ENCODE measurements at regions of chr5 and their contacts with region 1.

Region 1: GRCh38 chr5:62214701-62215100 is 91.3 kb upstream of the KIF2A start:
- DNase-seq: no peak
- H3K4me3 ChIP-seq: no peak overlapping the region
- H3K27ac ChIP-seq: no peak overlapping the region
- H3K4me1 ChIP-seq: no peaks in the 10 kb centered on the region
- H3K27me3 ChIP-seq: peaks cover 0 to 15% (median 0%) of the 10 kb centered on the region in 3 donors
- CTCF ChIP-seq: no peak
- EP300 ChIP-seq: no peak
- POLR2A ChIP-seq: no peak

Region 2: DNA sequence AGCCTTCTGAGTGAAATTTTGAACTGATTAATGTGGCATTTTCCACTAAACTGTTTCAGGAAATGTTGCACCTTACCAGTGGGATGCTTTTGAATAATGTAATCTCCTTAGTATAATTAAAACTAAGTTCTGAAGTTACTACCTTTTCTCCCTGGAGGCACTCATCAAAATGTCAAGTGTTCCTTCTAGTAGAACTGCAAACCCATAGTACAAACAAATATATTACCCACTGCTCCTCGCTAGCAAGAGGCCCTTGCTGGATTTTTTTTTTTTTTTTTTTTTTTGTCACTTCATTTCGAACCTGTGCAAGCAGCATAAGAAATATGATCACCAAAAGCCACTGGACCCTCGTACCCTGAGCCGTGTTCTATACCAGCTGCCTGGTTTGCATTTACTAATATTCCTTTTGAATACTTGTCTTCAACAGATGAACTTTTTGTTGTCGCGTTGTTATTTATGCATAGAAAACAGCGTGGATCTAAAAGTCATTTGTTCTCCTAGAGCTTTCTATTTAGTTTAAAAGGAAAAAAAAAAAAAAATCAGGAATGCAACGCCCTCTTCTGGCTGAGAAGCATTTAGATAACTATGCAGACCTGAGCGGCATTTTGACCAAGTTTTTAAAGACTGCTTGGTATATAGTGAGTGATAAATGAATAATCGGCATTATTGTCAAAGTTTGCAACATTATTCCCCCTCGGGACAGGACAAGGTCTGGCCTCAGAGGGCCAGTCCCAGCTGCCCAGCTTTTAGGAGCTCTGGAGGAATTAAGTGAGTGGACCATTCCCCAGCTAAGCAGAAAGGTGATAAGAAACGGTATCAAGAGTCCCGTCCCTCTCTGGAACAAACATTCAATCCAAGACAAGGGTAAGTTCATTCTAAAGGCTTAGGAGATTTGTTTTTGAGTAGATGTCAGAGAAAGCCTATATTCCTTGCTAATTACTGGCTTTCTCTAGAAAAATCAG is 71.2 kb before region 1 on chr5:
- intact Hi-C with region 1: no loop called
- DNase-seq: peak in 1 of 2 donors; percentile 62
- H3K4me3 ChIP-seq: no peak overlapping the region
- H3K27ac ChIP-seq: no peak overlapping the region
- H3K4me1 ChIP-seq: peaks cover 7 to 16% (median 13%) of the 10 kb centered on the region in 4 donors
- H3K27me3 ChIP-seq: peaks cover 0 to 7% (median 0%) of the 10 kb centered on the region in 3 donors
- CTCF ChIP-seq: peak in 2 of 7 experiments; percentile 34 to 42
- EP300 ChIP-seq: no peak
- POLR2A ChIP-seq: no peak

Region 3: DNA sequence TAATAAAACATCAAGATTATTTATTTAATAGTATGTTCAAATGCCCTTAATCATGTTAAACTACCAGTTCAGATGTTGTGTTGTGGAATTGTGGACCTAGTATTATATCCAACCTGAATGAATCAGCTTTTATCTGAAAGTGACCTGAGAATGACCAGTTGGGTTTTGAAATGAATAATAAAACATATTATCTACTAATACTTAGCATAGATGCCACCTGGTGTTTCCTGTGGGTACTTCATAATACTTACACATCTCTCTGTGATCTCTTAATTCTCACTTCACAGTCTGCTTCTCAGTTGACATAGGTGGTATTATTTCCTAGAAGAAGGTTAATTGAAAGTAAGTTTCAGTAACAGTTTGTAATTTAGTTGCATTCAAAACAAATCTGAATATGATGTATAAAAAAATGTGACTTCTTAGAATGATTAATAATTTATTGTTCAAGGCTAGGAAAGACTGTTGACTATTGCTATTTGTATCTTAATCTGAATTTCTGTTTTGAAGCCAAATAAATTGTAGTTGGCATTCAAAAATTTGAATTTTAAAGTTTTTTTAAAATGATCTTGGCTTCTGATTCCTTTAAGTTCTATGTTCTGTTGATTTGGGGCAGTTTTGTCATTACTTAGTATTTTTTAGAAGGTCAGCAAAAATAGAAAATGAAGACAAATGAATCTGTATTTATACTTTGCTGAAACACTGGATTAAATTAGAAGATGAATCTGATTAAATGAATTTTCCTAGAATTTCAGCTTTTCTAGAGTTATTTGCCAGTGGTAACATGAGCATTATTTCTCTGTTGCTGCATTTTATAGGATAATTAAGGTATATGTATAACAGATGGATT is 139.6 kb after region 1 on chr5:
- intact Hi-C with region 1: loop called (anchors 10 kb)
- DNase-seq: peak in 1 of 2 donors; percentile 77
- H3K4me3 ChIP-seq: no peak overlapping the region
- H3K27ac ChIP-seq: no peak overlapping the region
- H3K4me1 ChIP-seq: no peaks in the 10 kb centered on the region
- H3K27me3 ChIP-seq: no peaks in the 10 kb centered on the region
- CTCF ChIP-seq: peak in 4 of 7 experiments; percentile 36 to 60 (median 46)
- EP300 ChIP-seq: no peak
- POLR2A ChIP-seq: no peak